CD4-positive, alpha-beta memory T cell (primary cell): ENCODE measurements at regions of chr11 and their contacts with region 1.

Region 1: GRCh38 chr11:60775420-60775961 is 9.6 kb upstream of the MS4A10 start:
- DNase-seq: peak; percentile 77 to 80 (median 78)
- H3K4me3 ChIP-seq: no peak overlapping the region
- H3K4me3 Mint-ChIP-seq: peak overlapping the region in 2 of 8 donors; percentile 23 to 54
- H3K27ac ChIP-seq: no peak overlapping the region
- H3K27ac Mint-ChIP-seq: peak overlapping the region in 4 of 7 donors; percentile 26 to 87 (median 66)
- H3K4me1 ChIP-seq: no peaks in the 10 kb centered on the region
- H3K4me1 Mint-ChIP-seq: peaks cover 5 to 16% (median 8%) of the 10 kb centered on the region in 4 donors
- H3K27me3 ChIP-seq: no peaks in the 10 kb centered on the region
- H3K27me3 Mint-ChIP-seq: peaks cover 3 to 4% of the 10 kb centered on the region in 2 donors

Region 2: GRCh38 chr11:60647087-60647486 is 128.4 kb before region 1 on chr11:
- CTCF ChIA-PET with region 1: no interaction called
- POLR2A ChIA-PET with region 1: no interaction called
- intact Hi-C with region 1: no loop called
- DNase-seq: no peak
- H3K4me3 ChIP-seq: no peak overlapping the region
- H3K4me3 Mint-ChIP-seq: no peak overlapping the region
- H3K27ac ChIP-seq: no peak overlapping the region
- H3K27ac Mint-ChIP-seq: no peak overlapping the region
- H3K4me1 ChIP-seq: no peaks in the 10 kb centered on the region
- H3K4me1 Mint-ChIP-seq: no peaks in the 10 kb centered on the region
- H3K27me3 ChIP-seq: no peaks in the 10 kb centered on the region
- H3K27me3 Mint-ChIP-seq: peaks cover 2 to 5% of the 10 kb centered on the region in 2 donors

Region 3: DNA sequence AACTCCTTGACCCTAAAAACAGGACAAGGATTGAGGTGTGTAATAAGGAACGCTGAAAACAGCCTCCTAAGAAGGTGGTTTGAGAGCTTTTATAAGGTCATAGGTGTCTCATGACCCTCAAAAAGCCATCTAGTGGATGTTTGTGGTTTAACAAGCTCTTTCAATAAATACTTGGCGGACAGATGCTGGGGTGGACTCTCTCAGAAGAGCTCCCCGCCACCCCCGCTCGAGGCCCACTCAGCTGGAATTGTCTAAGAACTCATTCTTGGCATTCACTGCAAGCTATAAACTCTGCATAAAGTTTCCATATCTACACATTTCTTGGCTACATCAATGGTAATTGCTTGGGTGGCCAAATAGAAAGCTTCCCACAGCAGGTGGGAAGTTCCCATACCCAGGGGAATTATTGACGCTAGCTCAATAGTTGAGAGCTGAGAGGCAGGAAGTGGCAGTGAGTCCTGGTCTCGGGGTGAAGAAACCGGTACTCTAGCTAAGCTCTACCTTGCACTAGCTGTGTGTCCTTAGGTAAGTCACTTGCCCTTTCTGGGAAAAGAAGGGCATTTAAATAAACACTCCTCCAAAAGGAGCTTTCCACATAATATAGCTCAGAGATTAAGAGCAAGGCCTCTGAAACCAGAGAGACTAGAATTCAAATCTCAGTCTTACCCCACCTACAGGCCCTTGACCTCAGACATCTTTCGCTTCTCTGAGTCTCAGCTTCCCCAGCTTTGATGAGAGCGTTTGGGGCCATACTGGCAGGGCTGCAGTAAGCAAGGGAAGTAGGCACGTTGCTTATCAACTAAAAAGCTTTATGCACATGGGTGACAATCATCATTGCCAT is 12.4 kb before region 1 on chr11:
- CTCF ChIA-PET with region 1: interaction called, 24 read pairs
- POLR2A ChIA-PET with region 1: no interaction called
- intact Hi-C with region 1: no loop called
- DNase-seq: no peak
- H3K4me3 ChIP-seq: no peak overlapping the region
- H3K4me3 Mint-ChIP-seq: no peak overlapping the region
- H3K27ac ChIP-seq: no peak overlapping the region
- H3K27ac Mint-ChIP-seq: no peak overlapping the region
- H3K4me1 ChIP-seq: no peaks in the 10 kb centered on the region
- H3K4me1 Mint-ChIP-seq: peaks cover 0 to 2% (median 0%) of the 10 kb centered on the region in 4 donors
- H3K27me3 ChIP-seq: no peaks in the 10 kb centered on the region
- H3K27me3 Mint-ChIP-seq: peaks cover 38 to 60% of the 10 kb centered on the region in 2 donors

Region 4: GRCh38 chr11:60785806-60786361 is 10.4 kb after region 1 on chr11:
- CTCF ChIA-PET with region 1: interaction called, 13 read pairs
- POLR2A ChIA-PET with region 1: no interaction called
- intact Hi-C with region 1: no loop called
- DNase-seq: no peak
- H3K4me3 ChIP-seq: no peak overlapping the region
- H3K4me3 Mint-ChIP-seq: no peak overlapping the region
- H3K27ac ChIP-seq: no peak overlapping the region
- H3K27ac Mint-ChIP-seq: no peak overlapping the region
- H3K4me1 ChIP-seq: no peaks in the 10 kb centered on the region
- H3K4me1 Mint-ChIP-seq: no peaks in the 10 kb centered on the region
- H3K27me3 ChIP-seq: no peaks in the 10 kb centered on the region
- H3K27me3 Mint-ChIP-seq: no peaks in the 10 kb centered on the region